Psoas muscle (tissue), 8 donors: ENCODE measurements at regions of chr3 and their contacts with region 1.

Region 1: GRCh38 chr3:128665362-128666038 is 14.9 kb upstream of the RPN1 start:
- DNase-seq: no peak
- ATAC-seq: no peak
- H3K4me3 ChIP-seq: no peak overlapping the region
- H3K27ac ChIP-seq: no peak overlapping the region
- H3K4me1 ChIP-seq: no peaks in the 10 kb centered on the region
- H3K27me3 ChIP-seq: no peaks in the 10 kb centered on the region
- CTCF ChIP-seq: no peak

Region 2: DNA sequence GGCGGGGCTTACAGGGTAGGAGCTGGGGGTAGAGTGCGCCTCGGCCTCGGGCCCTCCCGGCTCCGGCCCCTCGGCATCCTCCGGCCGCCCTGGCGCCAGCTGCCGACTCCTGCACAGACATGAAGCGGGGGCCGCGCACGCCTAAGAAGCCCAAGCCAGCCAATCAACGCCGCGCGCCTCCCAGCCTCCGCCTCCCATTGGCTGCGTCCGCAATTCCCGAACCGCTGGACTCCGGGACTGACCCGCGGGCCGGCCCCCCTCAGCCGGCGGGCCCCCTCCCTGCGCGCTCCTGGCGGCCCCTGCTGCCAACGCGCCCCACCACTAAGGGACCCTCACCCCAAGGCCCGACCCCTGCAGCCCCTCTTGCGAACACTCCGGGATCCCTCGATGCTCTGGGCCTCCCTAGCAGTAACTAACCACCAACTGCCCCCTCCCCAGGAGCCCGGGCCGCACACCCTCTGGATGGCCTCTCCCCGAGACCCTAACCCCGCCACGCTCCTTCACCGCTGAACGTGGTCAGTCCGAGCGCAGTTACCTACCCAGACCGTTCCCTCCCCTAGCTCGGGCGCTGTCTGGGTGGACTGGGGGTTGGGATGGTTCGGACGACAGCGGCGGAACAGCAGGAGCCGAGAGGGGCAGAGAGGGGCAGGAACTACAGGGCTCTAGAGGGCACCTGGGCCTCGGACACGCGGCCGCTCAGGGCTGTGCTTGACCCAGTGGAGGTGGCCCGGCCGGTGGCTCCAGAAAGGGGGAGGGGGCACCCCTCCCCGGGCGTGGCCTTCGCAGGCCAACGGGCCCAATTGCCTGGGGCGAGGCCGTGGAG is 177.5 kb before region 1 on chr3:
- intact Hi-C with region 1: no loop called
- DNase-seq: peak; percentile 84 to 88
- ATAC-seq: peak; percentile 79 to 86 (median 82)
- H3K4me3 ChIP-seq: peak overlapping the region; percentile 73
- H3K27ac ChIP-seq: peak overlapping the region; percentile 68
- H3K4me1 ChIP-seq: peaks cover 55% of the 10 kb centered on the region
- H3K27me3 ChIP-seq: peaks cover 0 to 100% (median 70%) of the 10 kb centered on the region in 3 donors
- CTCF ChIP-seq: no peak

Region 3: GRCh38 chr3:128698211-128699064 is 32.9 kb after region 1 on chr3:
- intact Hi-C with region 1: loop called in 1 of 2 experiments (anchors 1 kb)
- DNase-seq: peak; percentile 48 to 71
- ATAC-seq: peak; percentile 78 to 88 (median 80)
- H3K4me3 ChIP-seq: peak overlapping the region; percentile 76
- H3K27ac ChIP-seq: peak overlapping the region; percentile 82
- H3K4me1 ChIP-seq: no peaks in the 10 kb centered on the region
- H3K27me3 ChIP-seq: no peaks in the 10 kb centered on the region
- CTCF ChIP-seq: no peak